Caco-2 (cell line): ENCODE measurements at regions of chr7 and their contacts with region 1.

Region 1: DNA sequence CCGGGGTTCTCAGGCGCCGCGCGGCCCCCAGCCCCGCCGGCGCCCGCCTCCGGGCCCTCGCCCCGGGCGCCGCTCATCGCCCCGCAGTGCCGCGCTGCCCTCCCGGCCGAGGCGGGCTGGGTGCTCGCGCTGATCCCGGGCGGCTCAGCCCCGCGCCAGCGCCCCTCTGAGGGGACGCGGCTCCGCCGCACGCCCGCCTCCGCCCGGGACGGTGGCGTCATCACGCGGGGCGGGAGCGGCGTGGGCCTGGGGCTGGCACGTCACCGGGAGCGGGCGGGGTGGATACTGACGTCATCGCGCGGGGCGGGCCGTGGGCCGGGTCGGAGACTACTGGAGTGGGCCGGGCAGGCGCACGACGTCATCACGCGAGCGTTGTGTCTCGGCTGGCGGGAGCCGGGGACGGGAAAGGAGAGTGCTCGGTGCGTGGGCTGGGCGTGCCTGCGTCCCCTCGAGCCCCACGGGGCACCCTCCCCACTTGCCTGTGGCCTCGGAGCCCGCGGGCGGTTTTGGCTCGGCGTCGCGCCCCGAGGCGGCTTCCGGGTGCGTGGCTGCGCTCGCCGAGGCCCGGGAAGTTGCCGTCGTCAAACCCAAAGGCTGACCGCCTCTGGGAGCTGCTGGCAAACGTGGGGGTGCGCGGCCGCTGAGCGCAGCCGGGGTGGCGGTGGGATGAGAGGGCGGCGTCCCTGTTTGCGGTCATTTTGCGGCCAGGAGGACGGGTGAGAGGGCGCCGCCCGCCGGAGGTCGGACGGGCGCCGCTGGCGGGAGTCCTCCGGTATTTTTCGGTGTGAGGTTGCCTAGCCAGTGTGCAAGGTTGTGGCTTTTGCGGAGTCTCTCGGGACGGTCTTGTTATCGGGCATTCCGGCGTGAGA is at the start of gene ESYT2:
- DNase-seq: peak; percentile 98 to 99
- H3K4me3 ChIP-seq: peak within 1 kb of the TSS; percentile 100
- H3K4me3 Mint-ChIP-seq: peak within 1 kb of the TSS; percentile 83
- H3K27ac Mint-ChIP-seq: peak within 1 kb of the TSS; percentile 79
- H3K4me1 ChIP-seq: peaks cover 9% of the 10 kb centered on the region; the same call in 1 of the 2 replicates
- H3K4me1 Mint-ChIP-seq: peaks cover 12% of the 10 kb centered on the region
- H3K27me3 ChIP-seq: no peaks in the 10 kb centered on the region
- H3K27me3 Mint-ChIP-seq: no peaks in the 10 kb centered on the region
- CTCF ChIP-seq: peak in 1 of 2 experiments; percentile 43
- total RNA-seq, gene ESYT2: 55.2 and 59.4 TPM in 2 replicates

Region 2: DNA sequence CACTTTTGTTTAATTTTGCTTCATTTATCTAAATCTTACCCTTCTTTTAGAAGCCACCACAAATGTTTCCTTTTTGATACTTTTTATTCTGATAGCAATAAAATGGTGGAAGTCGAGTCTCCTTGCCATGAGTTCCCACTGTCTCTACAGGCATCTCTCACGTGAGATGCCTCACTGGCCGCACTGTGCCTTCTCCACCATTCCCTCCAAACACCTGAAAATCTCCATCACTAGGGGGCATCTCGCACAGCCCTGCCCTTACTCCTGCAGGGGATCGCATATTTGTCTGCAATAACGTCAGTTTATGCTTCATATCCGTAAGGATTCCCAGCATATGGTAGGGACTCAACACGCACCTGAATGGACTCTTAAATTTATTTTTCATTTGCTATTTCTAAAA is 68.6 kb before region 1 on chr7:
- CTCF ChIA-PET with region 1: no interaction called
- POLR2A ChIA-PET with region 1: no interaction called
- intact Hi-C with region 1: loop called (anchors 10 kb)
- DNase-seq: peak in 1 of 2 experiments; percentile 28
- H3K4me3 ChIP-seq: no peak overlapping the region
- H3K4me3 Mint-ChIP-seq: no peak overlapping the region
- H3K27ac Mint-ChIP-seq: no peak overlapping the region
- H3K4me1 ChIP-seq: no peaks in the 10 kb centered on the region
- H3K4me1 Mint-ChIP-seq: no peaks in the 10 kb centered on the region
- H3K27me3 ChIP-seq: no peaks in the 10 kb centered on the region
- H3K27me3 Mint-ChIP-seq: no peaks in the 10 kb centered on the region
- CTCF ChIP-seq: peak in 1 of 2 experiments; percentile 17

Region 3: DNA sequence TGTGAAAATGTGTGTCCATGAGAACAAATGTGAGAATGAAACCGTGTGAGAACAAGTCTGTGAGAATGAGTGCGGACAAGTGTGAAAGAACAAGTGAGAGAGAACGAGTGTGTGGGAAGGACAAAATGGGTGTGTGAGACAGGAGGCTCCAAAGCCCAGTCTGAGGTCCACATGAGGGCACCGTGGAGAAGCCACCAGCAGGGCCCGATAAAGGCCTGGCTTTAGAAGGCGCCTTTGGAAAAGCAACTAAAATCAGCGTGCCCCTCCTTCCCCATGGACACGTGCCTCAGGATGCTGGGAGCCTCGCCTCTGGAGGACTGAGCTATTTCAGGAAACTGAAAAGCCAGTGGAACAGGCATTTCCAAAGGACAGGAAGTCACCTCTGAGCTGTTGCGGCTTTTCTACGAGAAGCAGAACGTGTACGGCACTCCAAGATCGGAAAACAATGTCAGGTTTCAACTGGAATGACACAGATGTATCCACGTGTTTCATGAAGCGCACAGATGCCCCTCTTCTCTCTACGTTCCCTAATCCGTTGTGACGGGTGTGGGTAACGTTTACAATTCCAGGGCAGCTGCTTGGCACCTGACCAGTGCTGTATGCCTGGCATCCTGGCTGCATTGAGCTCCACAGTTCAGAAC is 46.7 kb before region 1 on chr7:
- CTCF ChIA-PET with region 1: no interaction called
- POLR2A ChIA-PET with region 1: no interaction called
- intact Hi-C with region 1: loop called (anchors 2 kb)
- DNase-seq: peak; percentile 46 to 50
- H3K4me3 ChIP-seq: no peak overlapping the region
- H3K4me3 Mint-ChIP-seq: no peak overlapping the region
- H3K27ac Mint-ChIP-seq: no peak overlapping the region
- H3K4me1 ChIP-seq: peaks cover 16% of the 10 kb centered on the region
- H3K4me1 Mint-ChIP-seq: no peaks in the 10 kb centered on the region
- H3K27me3 ChIP-seq: no peaks in the 10 kb centered on the region
- H3K27me3 Mint-ChIP-seq: no peaks in the 10 kb centered on the region
- CTCF ChIP-seq: peak in 1 of 2 experiments; percentile 31

Region 4: DNA sequence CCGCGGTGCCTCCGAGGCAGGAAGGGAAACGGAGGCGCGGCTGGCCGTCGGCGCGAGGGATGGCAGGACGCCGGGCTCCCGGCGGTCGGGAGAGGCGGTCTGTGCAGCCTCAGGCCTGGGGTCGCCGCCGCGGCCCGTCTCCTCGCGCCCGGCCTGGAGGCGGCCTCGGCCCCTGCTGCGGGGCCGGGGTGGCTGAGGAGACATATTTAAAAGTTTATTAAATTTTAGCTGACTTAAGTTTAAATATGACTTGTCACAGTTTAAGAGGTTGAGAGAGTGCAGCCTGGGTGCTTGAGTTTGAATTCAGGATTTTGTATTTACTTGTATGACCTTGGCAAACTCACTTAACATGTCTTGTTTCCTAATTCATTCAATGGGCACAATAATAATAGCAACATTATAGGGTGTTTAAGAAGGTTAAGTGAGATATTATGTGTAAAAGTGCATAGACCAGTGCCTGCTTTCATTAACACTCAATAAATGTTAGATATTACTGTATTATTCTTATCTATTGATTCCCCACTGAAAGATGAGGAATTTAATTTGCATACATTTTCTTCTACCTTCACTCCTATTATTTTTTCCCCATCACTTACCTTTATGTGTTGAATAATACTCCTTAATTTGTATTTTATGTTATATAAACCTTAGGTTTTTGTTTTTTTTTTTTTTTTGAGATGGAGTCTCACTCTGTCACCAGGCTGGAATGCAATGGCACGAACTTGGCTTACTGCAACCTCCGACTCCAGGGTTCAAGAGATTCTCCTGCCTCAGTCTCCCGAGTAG is 27.5 kb after region 1 on chr7:
- CTCF ChIA-PET with region 1: no interaction called
- POLR2A ChIA-PET with region 1: no interaction called
- intact Hi-C with region 1: loop called (anchors 2 kb)
- DNase-seq: no peak
- H3K4me3 ChIP-seq: peak overlapping the region; percentile 87
- H3K4me3 Mint-ChIP-seq: peak overlapping the region; percentile 99
- H3K27ac Mint-ChIP-seq: peak overlapping the region; percentile 97
- H3K4me1 ChIP-seq: peaks cover 5% of the 10 kb centered on the region; the same call in 1 of the 2 replicates
- H3K4me1 Mint-ChIP-seq: peaks cover 6% of the 10 kb centered on the region
- H3K27me3 ChIP-seq: no peaks in the 10 kb centered on the region
- H3K27me3 Mint-ChIP-seq: no peaks in the 10 kb centered on the region
- CTCF ChIP-seq: no peak

Region 5: DNA sequence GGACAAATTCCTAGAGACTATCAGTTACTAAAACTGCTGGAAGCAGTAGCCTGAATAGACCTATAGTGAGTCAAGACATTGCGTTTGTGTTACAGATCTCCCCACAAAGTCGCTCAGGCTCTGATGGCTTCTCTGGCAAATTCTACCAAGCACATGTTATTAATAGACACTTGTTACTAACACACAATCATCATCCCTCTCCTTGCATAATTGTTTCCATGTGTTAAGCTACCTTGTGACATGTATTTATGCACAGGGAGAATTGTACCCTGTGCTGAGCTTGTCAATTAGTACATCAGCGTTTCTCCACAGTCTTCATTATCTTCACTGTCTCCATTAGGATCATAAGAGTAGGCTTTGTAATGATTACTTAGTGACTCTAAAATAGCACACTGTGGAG is 58.0 kb after region 1 on chr7:
- CTCF ChIA-PET with region 1: no interaction called
- POLR2A ChIA-PET with region 1: no interaction called
- intact Hi-C with region 1: no loop called
- DNase-seq: no peak
- H3K4me3 ChIP-seq: no peak overlapping the region
- H3K4me3 Mint-ChIP-seq: no peak overlapping the region
- H3K27ac Mint-ChIP-seq: no peak overlapping the region
- H3K4me1 ChIP-seq: no peaks in the 10 kb centered on the region
- H3K4me1 Mint-ChIP-seq: no peaks in the 10 kb centered on the region
- H3K27me3 ChIP-seq: no peaks in the 10 kb centered on the region
- H3K27me3 Mint-ChIP-seq: no peaks in the 10 kb centered on the region
- CTCF ChIP-seq: no peak